HEK293 (cell line): ENCODE measurements at regions of chr1 and their contacts with region 1.

Region 1: DNA sequence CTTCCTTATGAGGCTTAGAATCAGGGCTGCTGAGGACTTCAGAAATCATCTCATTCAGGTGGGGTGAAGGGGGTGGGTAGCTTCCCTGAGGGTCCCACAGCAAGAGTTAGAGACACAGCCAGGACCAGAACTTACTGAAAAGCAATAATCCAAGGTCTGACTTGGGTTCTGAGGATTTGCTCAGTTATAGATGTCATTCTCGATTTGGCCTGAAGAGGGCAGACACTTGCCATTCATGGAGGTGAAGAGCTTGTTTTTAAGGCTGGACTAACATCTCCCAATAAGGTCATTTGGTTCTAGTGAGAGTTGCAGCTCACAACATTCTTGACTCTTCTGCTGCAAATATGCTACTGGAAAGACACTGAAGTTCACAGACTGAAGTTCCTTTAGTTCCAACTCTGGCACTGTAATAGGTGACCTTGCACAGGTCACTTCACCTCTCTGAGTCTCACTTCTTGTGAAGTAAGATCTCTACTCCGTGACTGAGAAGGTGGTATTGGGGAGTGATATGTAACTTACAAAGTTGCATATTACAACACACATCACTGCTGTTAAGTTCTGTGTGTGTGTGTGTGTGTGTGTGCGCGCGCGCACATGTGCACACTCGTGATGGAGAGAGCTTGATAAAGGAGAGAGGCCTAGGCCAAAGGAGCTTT is 69.8 kb upstream of the DIRAS3 start:
- H3K4me3 ChIP-seq: no peak overlapping the region
- H3K27ac ChIP-seq: no peak overlapping the region
- H3K4me1 ChIP-seq: no peaks in the 10 kb centered on the region
- CTCF ChIP-seq: peak; percentile 65; the same call in 1 of the 2 replicates

Region 2: DNA sequence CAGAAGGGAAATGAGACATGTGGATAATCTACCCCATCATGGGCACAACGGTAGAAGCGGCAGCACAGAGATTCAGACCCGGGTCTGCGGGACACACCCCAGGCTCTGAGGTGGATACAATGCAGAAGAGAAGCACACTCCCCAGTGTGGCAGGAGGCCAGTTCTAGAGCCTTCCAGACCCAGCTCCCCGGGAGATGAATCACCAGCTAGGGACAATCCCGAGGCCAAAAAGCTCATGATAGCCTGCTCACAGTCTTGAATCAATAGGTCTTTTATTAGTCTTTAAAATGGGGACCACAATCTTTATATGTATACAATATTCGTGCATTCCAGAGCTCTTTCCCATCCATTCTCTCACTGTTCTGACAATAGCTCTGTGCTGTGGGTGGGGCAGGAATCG is 12.5 kb before region 1 on chr1:
- CTCF ChIA-PET with region 1: interaction called, 17 read pairs
- POLR2A ChIA-PET with region 1: no interaction called
- H3K4me3 ChIP-seq: no peak overlapping the region
- H3K27ac ChIP-seq: no peak overlapping the region
- H3K4me1 ChIP-seq: no peaks in the 10 kb centered on the region
- CTCF ChIP-seq: no peak

Region 3: GRCh38 chr1:68149110-68149798 is 29.0 kb after region 1 on chr1:
- CTCF ChIA-PET with region 1: interaction called, 10 read pairs
- POLR2A ChIA-PET with region 1: no interaction called
- H3K4me3 ChIP-seq: no peak overlapping the region
- H3K27ac ChIP-seq: no peak overlapping the region
- H3K4me1 ChIP-seq: no peaks in the 10 kb centered on the region
- CTCF ChIP-seq: no peak

Region 4: DNA sequence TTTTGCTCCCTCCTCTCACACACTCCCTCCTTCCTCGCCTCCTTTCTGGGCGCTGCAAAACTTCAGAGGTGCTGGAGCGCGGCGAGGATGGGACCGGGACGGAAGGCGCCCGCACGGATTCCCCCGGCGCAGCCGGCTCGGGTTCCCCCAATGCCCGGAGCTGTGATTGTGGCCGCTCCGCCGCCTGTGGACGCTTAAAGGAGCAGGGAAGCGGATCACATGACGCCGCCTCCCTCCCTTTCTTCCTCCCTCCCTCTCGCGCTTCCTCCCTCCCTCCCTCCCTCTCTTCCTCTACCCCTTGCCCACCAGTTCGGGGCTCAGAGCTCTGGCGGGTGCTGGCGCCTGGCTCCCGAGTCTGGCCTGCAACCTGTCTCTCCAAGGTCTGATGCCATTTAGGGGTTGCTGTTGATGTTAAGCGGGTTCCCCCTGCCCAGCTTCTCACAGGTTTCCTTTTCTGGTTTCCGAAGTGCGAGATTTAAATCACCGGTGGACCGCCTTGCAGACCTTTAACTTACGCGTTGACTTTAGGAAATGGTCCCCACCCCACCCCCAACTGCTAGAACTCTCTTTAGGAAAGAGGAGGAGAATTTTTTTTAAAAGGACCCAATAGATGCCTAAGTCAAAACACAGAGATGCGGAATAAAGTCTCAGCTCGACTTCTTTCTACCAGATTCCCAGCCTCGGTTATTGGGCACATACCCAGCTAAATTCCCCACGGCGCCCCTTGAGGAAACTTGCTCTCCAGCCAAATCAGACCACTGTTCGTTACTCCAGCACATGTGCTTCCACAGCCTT is 112.3 kb after region 1 on chr1 and contains the start of gene WLS:
- CTCF ChIA-PET with region 1: interaction called, 15 read pairs
- POLR2A ChIA-PET with region 1: no interaction called
- H3K4me3 ChIP-seq: peak within 1 kb of the TSS; percentile 79
- H3K27ac ChIP-seq: peak within 1 kb of the TSS; percentile 93
- H3K4me1 ChIP-seq: peaks cover 11% of the 10 kb centered on the region
- CTCF ChIP-seq: 0 out of 2 replicates have a peak, but pooled peaks have one; percentile 15

Region 5: GRCh38 chr1:68346188-68346808 is 226.0 kb after region 1 on chr1:
- CTCF ChIA-PET with region 1: interaction called, 292 read pairs
- POLR2A ChIA-PET with region 1: interaction called, 4 read pairs
- H3K4me3 ChIP-seq: no peak overlapping the region
- H3K27ac ChIP-seq: no peak overlapping the region
- H3K4me1 ChIP-seq: no peaks in the 10 kb centered on the region
- CTCF ChIP-seq: no peak

Region 6: DNA sequence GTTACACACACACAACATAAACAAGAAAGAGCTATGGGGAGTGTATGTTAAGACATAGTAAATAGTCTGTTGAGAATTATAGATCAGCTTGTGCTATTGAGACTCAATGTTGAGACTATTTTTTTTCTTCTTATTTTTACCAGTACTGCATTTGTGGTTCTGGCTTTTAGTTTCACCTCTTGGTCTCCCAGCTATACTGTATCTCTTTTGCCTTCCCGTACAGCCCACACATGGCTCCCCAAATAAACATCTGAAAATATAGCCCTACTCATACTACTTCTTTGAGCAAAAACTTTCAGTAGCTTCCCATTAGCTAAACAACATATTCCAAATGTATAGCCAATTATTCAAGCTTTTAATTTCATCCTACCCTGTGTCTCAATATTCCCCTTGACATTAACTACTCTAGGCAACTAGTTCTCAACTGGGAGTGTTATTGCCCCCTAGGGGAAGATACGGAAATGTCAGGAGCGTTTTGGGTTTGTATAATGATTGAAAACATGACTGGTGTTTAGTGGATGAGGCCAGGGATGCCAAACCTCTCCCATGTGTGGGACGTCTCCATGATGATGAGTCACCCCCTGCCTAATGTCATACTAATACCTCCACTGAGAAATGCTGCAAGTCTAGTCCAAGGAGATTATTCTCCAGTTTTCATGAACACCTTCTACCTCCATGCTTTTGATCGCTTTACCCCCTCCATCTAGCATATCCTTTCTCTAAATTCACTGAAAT is 322.7 kb after region 1 on chr1:
- CTCF ChIA-PET with region 1: interaction called, 32 read pairs
- POLR2A ChIA-PET with region 1: no interaction called
- H3K4me3 ChIP-seq: no peak overlapping the region
- H3K27ac ChIP-seq: no peak overlapping the region
- H3K4me1 ChIP-seq: no peaks in the 10 kb centered on the region
- CTCF ChIP-seq: no peak